CD8-positive, alpha-beta T cell (primary cell): ENCODE measurements at regions of chr9 and their contacts with region 1.

Region 1: GRCh38 chr9:109320742-109321448 is at the start of gene EPB41L4B:
- DNase-seq: peak; percentile 66 to 86 (median 81)
- ATAC-seq: peak; percentile 98
- H3K4me3 ChIP-seq: no peak within 1 kb of the TSS
- H3K4me3 Mint-ChIP-seq: peak within 1 kb of the TSS; percentile 85
- H3K27ac ChIP-seq: no peak within 1 kb of the TSS
- H3K27ac Mint-ChIP-seq: no peak within 1 kb of the TSS
- H3K4me1 ChIP-seq: peaks cover 7% of the 10 kb centered on the region
- H3K4me1 Mint-ChIP-seq: peaks cover 16% of the 10 kb centered on the region
- H3K27me3 ChIP-seq: peaks cover 0 to 4% of the 10 kb centered on the region in 2 experiments
- H3K27me3 Mint-ChIP-seq: peaks cover 53% of the 10 kb centered on the region
- CTCF ChIP-seq: peak; percentile 61
- total RNA-seq, gene EPB41L4B: not detected

Region 2: GRCh38 chr9:109244157-109245132 is 76.5 kb before region 1 on chr9:
- CTCF ChIA-PET with region 1: no interaction called
- POLR2A ChIA-PET with region 1: no interaction called
- intact Hi-C with region 1: loop called (anchors 1 to 5 kb)
- DNase-seq: peak; percentile 32 to 74 (median 60)
- ATAC-seq: peak; percentile 56
- H3K4me3 ChIP-seq: no peak overlapping the region
- H3K4me3 Mint-ChIP-seq: no peak overlapping the region
- H3K27ac ChIP-seq: no peak overlapping the region
- H3K27ac Mint-ChIP-seq: no peak overlapping the region
- H3K4me1 ChIP-seq: no peaks in the 10 kb centered on the region
- H3K4me1 Mint-ChIP-seq: peaks cover 5% of the 10 kb centered on the region
- H3K27me3 ChIP-seq: peaks cover 0 to 4% of the 10 kb centered on the region in 2 experiments
- H3K27me3 Mint-ChIP-seq: peaks cover 15% of the 10 kb centered on the region
- CTCF ChIP-seq: peak; percentile 86